RWPE1 (cell line): ENCODE measurements at regions of chr15 and their contacts with region 1.

Region 1: GRCh38 chr15:90214553-90215196 is 13.5 kb downstream of the SEMA4B start:
- DNase-seq: no peak
- H3K27ac ChIP-seq: peak overlapping the region; percentile 100
- CTCF ChIP-seq: no peak

Region 2: DNA sequence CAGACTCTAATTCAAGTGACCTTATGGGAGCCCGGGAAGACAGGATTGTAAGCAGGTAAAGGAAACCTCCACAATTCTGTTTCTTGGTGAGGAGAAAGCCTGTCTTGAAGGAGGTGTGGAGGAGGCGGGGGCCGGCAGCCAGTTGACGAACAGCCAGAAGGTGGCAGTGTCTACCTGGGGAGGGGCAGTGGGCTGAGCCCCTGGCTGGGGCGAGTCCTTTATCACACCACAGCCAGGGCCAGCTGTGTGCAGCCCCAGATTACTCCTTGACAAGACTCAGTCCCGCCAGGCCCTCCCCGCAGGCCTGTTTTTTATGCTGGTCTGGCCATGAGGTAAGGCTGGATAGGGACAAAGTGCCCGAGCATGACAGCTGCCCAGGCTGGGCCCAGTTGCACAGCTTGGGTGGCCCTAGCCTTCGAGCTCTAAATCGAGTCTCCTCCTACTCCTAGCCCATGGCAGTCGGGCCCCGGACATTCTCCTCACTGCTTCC is 71.5 kb before region 1 on chr15:
- CTCF ChIA-PET with region 1: interaction called, 10 read pairs
- POLR2A ChIA-PET with region 1: no interaction called
- DNase-seq: peak; percentile 72
- H3K27ac ChIP-seq: peak overlapping the region; percentile 12; the same call in 1 of the 2 replicates
- CTCF ChIP-seq: peak; percentile 92

Region 3: GRCh38 chr15:90153658-90154057 is 61.0 kb before region 1 on chr15:
- CTCF ChIA-PET with region 1: interaction called, 10 read pairs
- POLR2A ChIA-PET with region 1: interaction called, 14 read pairs
- DNase-seq: no peak
- H3K27ac ChIP-seq: no peak overlapping the region
- CTCF ChIP-seq: no peak

Region 4: GRCh38 chr15:90165659-90166421 is 48.8 kb before region 1 on chr15:
- CTCF ChIA-PET with region 1: interaction called, 10 read pairs
- POLR2A ChIA-PET with region 1: no interaction called
- DNase-seq: peak; percentile 96
- H3K27ac ChIP-seq: peak overlapping the region; percentile 94
- CTCF ChIP-seq: no peak

Region 5: GRCh38 chr15:90191794-90192509 is 22.7 kb before region 1 on chr15:
- CTCF ChIA-PET with region 1: interaction called, 5 read pairs
- POLR2A ChIA-PET with region 1: interaction called, 14 read pairs
- DNase-seq: peak; percentile 58
- H3K27ac ChIP-seq: peak overlapping the region; percentile 98
- CTCF ChIP-seq: no peak

Region 6: DNA sequence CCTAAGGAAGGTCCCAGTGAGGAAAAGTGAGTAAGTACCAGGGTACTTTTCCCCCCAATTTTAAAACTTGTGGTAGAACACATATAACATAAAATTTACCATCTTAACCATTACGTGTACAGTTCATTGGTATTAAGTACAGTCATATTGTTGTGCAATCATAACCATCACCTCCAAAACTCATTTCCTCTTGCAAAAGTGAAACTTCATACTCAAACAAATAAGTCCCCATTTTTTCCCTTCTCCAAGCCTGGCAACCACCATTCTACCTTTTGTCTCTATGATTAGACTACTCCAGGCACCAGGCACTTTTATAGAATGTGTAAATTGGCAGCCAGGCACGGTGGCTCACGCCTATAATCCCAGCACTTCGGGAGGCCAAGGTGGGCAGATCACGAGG is 767.5 kb after region 1 on chr15:
- CTCF ChIA-PET with region 1: no interaction called
- POLR2A ChIA-PET with region 1: no interaction called
- DNase-seq: no peak
- H3K27ac ChIP-seq: peak overlapping the region; percentile 24; the same call in 1 of the 2 replicates
- CTCF ChIP-seq: no peak